ENCODE measurements at regions of chr3 and their contacts with region 1.

Region 1: DNA sequence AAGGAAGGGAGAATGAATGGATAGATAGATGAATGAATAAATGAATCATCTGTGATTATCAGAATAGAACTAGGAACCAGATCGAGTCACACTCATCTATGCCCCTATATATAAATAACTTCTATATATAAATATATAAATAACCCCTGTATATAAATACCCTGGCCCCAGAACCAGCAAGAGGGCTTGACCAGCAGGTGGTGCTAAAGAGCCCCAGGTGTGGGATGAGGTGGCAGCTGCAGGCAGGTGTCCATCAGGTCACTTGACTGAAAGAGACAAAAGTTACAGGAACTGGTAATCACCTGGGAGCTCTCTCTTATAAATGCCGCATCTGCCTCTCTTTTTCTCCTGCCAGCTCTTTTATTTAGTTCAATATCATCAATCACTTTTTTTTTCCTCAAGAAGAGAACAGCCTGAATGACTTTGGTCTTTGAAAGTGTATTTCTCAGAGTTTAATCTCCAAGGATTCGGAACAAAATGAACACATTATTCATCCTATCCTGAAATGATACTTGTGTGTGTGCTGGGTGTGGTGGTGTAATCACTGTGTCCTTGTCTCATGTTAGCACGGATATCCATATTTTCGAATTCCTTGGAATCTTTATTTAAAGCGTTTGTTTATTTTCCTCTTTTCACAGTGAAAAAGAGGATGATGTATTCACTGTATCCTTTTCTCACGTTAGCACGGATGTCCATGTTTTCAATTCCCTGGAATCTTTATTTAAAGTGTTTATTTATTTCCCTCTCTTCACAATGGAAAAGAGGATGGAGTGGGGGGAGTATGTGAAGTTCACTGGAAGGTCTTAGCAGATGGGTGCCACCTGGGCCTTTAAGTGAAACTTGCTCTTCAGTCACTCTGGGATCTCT is 35.4 kb upstream of the ATG7 start:
- DNase-seq: peak; percentile 49 to 80 (median 67)
- ATAC-seq: peak; percentile 78
- H3K4me3 ChIP-seq: no peak overlapping the region
- H3K4me3 Mint-ChIP-seq: no peak overlapping the region
- H3K27ac ChIP-seq: no peak overlapping the region
- H3K27ac Mint-ChIP-seq: no peak overlapping the region
- H3K4me1 ChIP-seq: no peaks in the 10 kb centered on the region
- H3K4me1 Mint-ChIP-seq: peaks cover 0 to 15% (median 0%) of the 10 kb centered on the region in 7 donors
- H3K27me3 ChIP-seq: no peaks in the 10 kb centered on the region
- H3K27me3 Mint-ChIP-seq: peaks cover 0 to 23% (median 7%) of the 10 kb centered on the region in 5 donors

Region 2: GRCh38 chr3:11250902-11251813 is 14.3 kb after region 1 on chr3:
- CTCF ChIA-PET with region 1: interaction called, 4 read pairs
- POLR2A ChIA-PET with region 1: no interaction called
- intact Hi-C with region 1: loop called in 1 of 2 experiments (anchors 1 kb)
- DNase-seq: peak in 4 of 9 donors; percentile 3 to 24 (median 16)
- ATAC-seq: peak; percentile 22
- H3K4me3 ChIP-seq: no peak overlapping the region
- H3K4me3 Mint-ChIP-seq: peak overlapping the region in 7 of 10 donors; percentile 16 to 59 (median 34)
- H3K27ac ChIP-seq: no peak overlapping the region
- H3K27ac Mint-ChIP-seq: peak overlapping the region; percentile 20 to 84 (median 63)
- H3K4me1 ChIP-seq: peaks cover 0 to 12% of the 10 kb centered on the region in 2 donors
- H3K4me1 Mint-ChIP-seq: peaks cover 0 to 20% (median 15%) of the 10 kb centered on the region in 7 donors
- H3K27me3 ChIP-seq: no peaks in the 10 kb centered on the region
- H3K27me3 Mint-ChIP-seq: peaks cover 0 to 4% (median 3%) of the 10 kb centered on the region in 5 donors

Region 3: GRCh38 chr3:11288786-11289682 is 52.2 kb after region 1 on chr3:
- CTCF ChIA-PET with region 1: interaction called, 11 read pairs
- POLR2A ChIA-PET with region 1: no interaction called
- intact Hi-C with region 1: loop called (anchors 2 to 5 kb)
- DNase-seq: no peak
- ATAC-seq: peak; percentile 77
- H3K4me3 ChIP-seq: no peak overlapping the region
- H3K4me3 Mint-ChIP-seq: peak overlapping the region in 2 of 10 donors; percentile 16 to 32
- H3K27ac ChIP-seq: peak overlapping the region; percentile 25
- H3K27ac Mint-ChIP-seq: peak overlapping the region; percentile 75 to 95 (median 82)
- H3K4me1 ChIP-seq: peaks cover 19 to 39% of the 10 kb centered on the region in 2 donors
- H3K4me1 Mint-ChIP-seq: peaks cover 42 to 63% (median 55%) of the 10 kb centered on the region in 7 donors
- H3K27me3 ChIP-seq: no peaks in the 10 kb centered on the region
- H3K27me3 Mint-ChIP-seq: no peaks in the 10 kb centered on the region

Region 4: GRCh38 chr3:11335056-11335608 is 98.3 kb after region 1 on chr3:
- CTCF ChIA-PET with region 1: interaction called, 30 read pairs
- POLR2A ChIA-PET with region 1: no interaction called
- intact Hi-C with region 1: loop called in 1 of 2 experiments (anchors 1 kb)
- DNase-seq: peak in 7 of 9 donors; percentile 35 to 66 (median 56)
- ATAC-seq: peak; percentile 86
- H3K4me3 ChIP-seq: no peak overlapping the region
- H3K4me3 Mint-ChIP-seq: no peak overlapping the region
- H3K27ac ChIP-seq: no peak overlapping the region
- H3K27ac Mint-ChIP-seq: no peak overlapping the region
- H3K4me1 ChIP-seq: no peaks in the 10 kb centered on the region
- H3K4me1 Mint-ChIP-seq: peaks cover 0 to 7% (median 0%) of the 10 kb centered on the region in 7 donors
- H3K27me3 ChIP-seq: no peaks in the 10 kb centered on the region
- H3K27me3 Mint-ChIP-seq: no peaks in the 10 kb centered on the region

Region 5: GRCh38 chr3:11350374-11350773 is 113.5 kb after region 1 on chr3:
- CTCF ChIA-PET with region 1: no interaction called
- POLR2A ChIA-PET with region 1: no interaction called
- intact Hi-C with region 1: no loop called
- DNase-seq: no peak
- ATAC-seq: no peak
- H3K4me3 ChIP-seq: no peak overlapping the region
- H3K4me3 Mint-ChIP-seq: no peak overlapping the region
- H3K27ac ChIP-seq: no peak overlapping the region
- H3K27ac Mint-ChIP-seq: no peak overlapping the region
- H3K4me1 ChIP-seq: no peaks in the 10 kb centered on the region
- H3K4me1 Mint-ChIP-seq: peaks cover 0 to 3% (median 0%) of the 10 kb centered on the region in 7 donors
- H3K27me3 ChIP-seq: no peaks in the 10 kb centered on the region
- H3K27me3 Mint-ChIP-seq: no peaks in the 10 kb centered on the region

Region 6: DNA sequence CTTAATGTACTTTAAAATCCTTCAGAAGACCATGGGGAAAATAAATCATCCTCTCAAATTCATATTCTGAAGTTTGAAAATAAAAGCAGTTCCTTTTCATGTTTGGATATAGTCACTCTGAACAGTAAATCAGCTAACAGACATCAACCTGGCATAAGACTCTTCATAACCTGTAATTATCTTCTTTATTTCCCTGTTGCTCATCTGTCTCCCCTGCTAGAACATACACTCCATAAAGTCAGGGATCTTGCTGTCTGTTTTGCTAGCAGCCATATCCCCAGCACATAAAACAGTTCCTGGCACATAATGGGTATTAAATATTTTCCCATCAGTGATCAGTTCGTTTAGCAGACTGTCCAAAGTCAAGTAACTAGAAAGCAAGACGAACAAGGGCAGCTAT is 395.7 kb after region 1 on chr3:
- CTCF ChIA-PET with region 1: no interaction called
- POLR2A ChIA-PET with region 1: no interaction called
- intact Hi-C with region 1: no loop called
- DNase-seq: no peak
- ATAC-seq: no peak
- H3K4me3 ChIP-seq: no peak overlapping the region
- H3K4me3 Mint-ChIP-seq: peak overlapping the region in 8 of 10 donors; percentile 3 to 90 (median 64)
- H3K27ac ChIP-seq: no peak overlapping the region
- H3K27ac Mint-ChIP-seq: peak overlapping the region in 8 of 9 donors; percentile 67 to 93 (median 78)
- H3K4me1 ChIP-seq: peaks cover 0 to 46% of the 10 kb centered on the region in 2 donors
- H3K4me1 Mint-ChIP-seq: peaks cover 59 to 90% (median 77%) of the 10 kb centered on the region in 7 donors
- H3K27me3 ChIP-seq: no peaks in the 10 kb centered on the region
- H3K27me3 Mint-ChIP-seq: no peaks in the 10 kb centered on the region

Region 7: GRCh38 chr3:11651900-11652299 is 415.1 kb after region 1 on chr3:
- CTCF ChIA-PET with region 1: interaction called, 5 read pairs
- POLR2A ChIA-PET with region 1: no interaction called
- intact Hi-C with region 1: loop called (anchors 1 kb)
- DNase-seq: peak in 7 of 9 donors; percentile 23 to 55 (median 48)
- ATAC-seq: peak; percentile 41
- H3K4me3 ChIP-seq: no peak overlapping the region
- H3K4me3 Mint-ChIP-seq: no peak overlapping the region
- H3K27ac ChIP-seq: no peak overlapping the region
- H3K27ac Mint-ChIP-seq: no peak overlapping the region
- H3K4me1 ChIP-seq: no peaks in the 10 kb centered on the region
- H3K4me1 Mint-ChIP-seq: peaks cover 0 to 13% (median 4%) of the 10 kb centered on the region in 7 donors
- H3K27me3 ChIP-seq: no peaks in the 10 kb centered on the region
- H3K27me3 Mint-ChIP-seq: peaks cover 0 to 28% (median 0%) of the 10 kb centered on the region in 5 donors

Region 8: DNA sequence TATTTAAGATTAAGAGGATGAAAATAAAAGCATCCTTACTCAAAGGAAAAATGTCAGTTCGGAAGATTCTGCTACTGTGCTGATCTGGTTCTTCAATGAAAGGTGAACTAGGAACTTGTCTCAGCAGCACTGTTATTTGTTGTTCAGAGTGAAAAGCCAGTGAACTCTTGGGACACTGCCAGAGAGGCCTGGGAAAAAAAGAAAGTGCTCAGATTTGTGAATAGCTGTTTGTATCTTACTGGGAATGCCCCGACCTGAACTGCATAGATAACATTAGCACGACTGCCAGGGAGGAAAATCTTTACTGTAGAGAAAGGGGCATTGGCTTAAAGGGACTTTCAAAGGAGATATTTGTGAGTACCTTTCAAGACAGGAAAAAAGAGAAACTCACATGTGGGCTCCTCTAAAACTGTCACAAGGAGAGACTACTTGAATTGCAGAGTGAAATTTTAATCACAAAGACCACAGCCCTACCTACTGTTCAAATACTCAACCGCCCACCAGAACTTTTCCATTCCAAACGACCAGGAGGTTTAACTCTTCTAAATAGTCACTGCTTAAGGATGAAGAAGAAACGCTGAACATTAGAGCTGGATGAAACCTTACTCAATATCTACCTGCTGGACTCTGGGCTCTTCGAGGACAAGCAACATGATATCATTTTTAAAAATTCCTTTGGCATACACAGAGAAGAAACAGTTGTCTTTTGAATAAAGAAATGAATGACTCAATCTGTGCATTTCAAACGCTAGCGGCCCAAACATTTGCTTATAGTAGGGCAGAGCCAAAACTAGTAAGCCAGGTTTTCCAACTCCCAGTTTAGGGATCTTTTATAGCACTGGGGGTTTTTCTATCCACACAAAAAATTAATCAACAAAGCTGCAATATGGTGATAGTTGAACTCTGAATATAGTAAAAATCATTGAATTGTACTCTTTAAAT is 596.4 kb after region 1 on chr3:
- CTCF ChIA-PET with region 1: no interaction called
- POLR2A ChIA-PET with region 1: no interaction called
- intact Hi-C with region 1: loop called in 1 of 2 experiments (anchors 5 kb)
- DNase-seq: no peak
- ATAC-seq: no peak
- H3K4me3 ChIP-seq: no peak overlapping the region
- H3K4me3 Mint-ChIP-seq: no peak overlapping the region
- H3K27ac ChIP-seq: no peak overlapping the region
- H3K27ac Mint-ChIP-seq: peak overlapping the region in 3 of 9 donors; percentile 8 to 41 (median 15)
- H3K4me1 ChIP-seq: no peaks in the 10 kb centered on the region
- H3K4me1 Mint-ChIP-seq: peaks cover 0 to 8% (median 0%) of the 10 kb centered on the region in 7 donors
- H3K27me3 ChIP-seq: no peaks in the 10 kb centered on the region
- H3K27me3 Mint-ChIP-seq: no peaks in the 10 kb centered on the region

Measured in naive thymus-derived CD4-positive, alpha-beta T cell (primary cell).